PC-9 (cell line): ENCODE measurements at regions of chr3 and their contacts with region 1.

Region 1: GRCh38 chr3:191869738-191870415 is 408.9 kb downstream of the PYDC2 start:
- DNase-seq: no peak
- H3K4me3 ChIP-seq: no peak overlapping the region
- H3K27ac ChIP-seq: no peak overlapping the region
- H3K4me1 ChIP-seq: no peaks in the 10 kb centered on the region
- H3K27me3 ChIP-seq: no peaks in the 10 kb centered on the region
- CTCF ChIP-seq: no peak

Region 2: GRCh38 chr3:192011137-192011536 is 141.3 kb after region 1 on chr3:
- CTCF ChIA-PET with region 1: no interaction called
- POLR2A ChIA-PET with region 1: no interaction called
- intact Hi-C with region 1: loop called (anchors 10 kb)
- DNase-seq: no peak
- H3K4me3 ChIP-seq: no peak overlapping the region
- H3K27ac ChIP-seq: no peak overlapping the region
- H3K4me1 ChIP-seq: no peaks in the 10 kb centered on the region
- H3K27me3 ChIP-seq: no peaks in the 10 kb centered on the region
- CTCF ChIP-seq: no peak